Ascending aorta (tissue), 2 donors: ENCODE measurements at regions of chr2 and their contacts with region 1.

Region 1: DNA sequence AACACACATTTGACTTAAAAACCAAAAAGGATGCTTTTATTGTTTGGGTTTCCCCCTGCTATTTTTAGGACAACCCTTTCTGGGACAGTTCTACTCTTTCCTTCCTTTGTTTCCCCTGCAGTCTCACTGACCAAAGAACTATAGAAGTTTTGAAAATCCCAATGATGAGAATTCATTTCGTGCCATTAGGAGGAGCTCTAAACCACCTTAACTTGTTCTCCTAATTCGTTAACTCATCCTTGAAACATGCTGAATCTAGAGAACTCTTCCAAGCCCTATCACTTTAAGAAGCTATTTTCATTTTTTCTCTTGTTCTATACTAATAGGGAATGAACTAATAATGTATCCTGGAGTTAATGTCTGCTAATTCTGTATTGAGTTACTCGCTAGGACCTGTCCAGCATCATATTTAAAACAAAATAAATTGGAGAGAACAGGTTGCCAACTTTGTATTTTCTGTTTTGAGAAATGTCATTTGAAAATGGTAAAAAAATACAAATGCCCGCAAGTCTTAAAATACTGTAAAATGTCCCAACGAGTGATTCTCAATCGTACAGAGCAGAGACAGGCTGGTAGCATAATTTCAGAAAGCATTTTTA is 62.9 kb downstream of the AFTPH start:
- DNase-seq: no peak
- H3K4me3 ChIP-seq: no peak overlapping the region
- H3K27ac ChIP-seq: no peak overlapping the region
- H3K4me1 ChIP-seq: peaks cover 0 to 3% of the 10 kb centered on the region in 2 donors
- H3K27me3 ChIP-seq: no peaks in the 10 kb centered on the region
- CTCF ChIP-seq: peak; percentile 54 to 67 (median 67)

Region 2: DNA sequence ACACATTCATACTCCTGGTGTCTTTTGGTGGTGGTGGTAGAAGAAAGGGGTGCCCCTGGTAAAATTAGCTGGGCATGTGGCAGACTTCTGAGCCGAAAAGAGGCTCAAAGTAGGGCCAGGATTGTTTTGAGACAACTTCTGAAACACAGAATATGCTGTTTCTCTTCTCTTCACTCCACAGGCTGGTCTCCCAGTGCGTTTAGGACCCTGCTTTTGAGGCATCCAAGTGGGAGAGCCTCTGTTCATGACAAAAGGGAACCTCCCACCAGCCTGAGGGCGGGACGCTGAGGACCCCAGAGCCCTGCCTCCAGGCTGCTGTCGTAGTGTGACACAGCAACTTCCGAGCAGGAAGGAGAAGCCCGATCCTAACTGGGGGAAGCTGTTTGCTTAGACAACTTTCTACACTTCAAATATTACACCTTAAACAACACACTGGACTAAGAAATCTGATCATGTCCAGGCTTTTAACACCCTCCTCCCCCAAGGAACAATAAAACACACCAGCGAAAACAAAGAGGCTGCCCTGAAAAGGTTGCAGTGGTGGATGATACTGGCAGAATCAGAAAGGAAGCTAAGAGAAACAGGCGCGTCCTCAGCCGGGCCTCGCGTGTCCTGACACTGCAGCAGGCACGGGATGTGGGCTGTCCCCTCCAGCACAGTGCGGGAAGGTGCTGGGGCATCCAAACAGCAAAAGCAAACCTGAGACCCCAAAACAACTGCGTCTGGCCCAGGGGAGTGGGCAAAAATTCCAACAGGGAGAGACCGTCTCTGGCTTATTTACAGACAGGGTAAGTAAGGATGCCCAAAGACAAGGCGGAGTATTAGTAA is 57.4 kb after region 1 on chr2:
- intact Hi-C with region 1: loop called (anchors 2 kb)
- DNase-seq: peak in 1 of 2 donors; percentile 88
- H3K4me3 ChIP-seq: peak overlapping the region; percentile 60 to 62
- H3K27ac ChIP-seq: peak overlapping the region; percentile 79 to 84
- H3K4me1 ChIP-seq: peaks cover 0 to 23% of the 10 kb centered on the region in 2 donors
- H3K27me3 ChIP-seq: no peaks in the 10 kb centered on the region
- CTCF ChIP-seq: no peak

Region 3: GRCh38 chr2:64865073-64865830 is 278.3 kb after region 1 on chr2:
- intact Hi-C with region 1: loop called (anchors 2 kb)
- DNase-seq: peak in 1 of 2 donors; percentile 84
- H3K4me3 ChIP-seq: peak overlapping the region; percentile 71 to 75
- H3K27ac ChIP-seq: peak overlapping the region; percentile 80 to 82
- H3K4me1 ChIP-seq: peaks cover 0 to 4% of the 10 kb centered on the region in 2 donors
- H3K27me3 ChIP-seq: no peaks in the 10 kb centered on the region
- CTCF ChIP-seq: peak; percentile 41 to 98 (median 47)